HEK293 (cell line): ENCODE measurements at regions of chr19 and their contacts with region 1.

Region 1: GRCh38 chr19:31054430-31054829 is 294.8 kb downstream of the TSHZ3 start:
- H3K4me3 ChIP-seq: no peak overlapping the region
- H3K27ac ChIP-seq: no peak overlapping the region
- H3K4me1 ChIP-seq: no peaks in the 10 kb centered on the region
- CTCF ChIP-seq: peak; percentile 78

Region 2: GRCh38 chr19:30669329-30670010 is 385.0 kb before region 1 on chr19:
- CTCF ChIA-PET with region 1: interaction called, 12 read pairs
- POLR2A ChIA-PET with region 1: no interaction called
- H3K4me3 ChIP-seq: no peak overlapping the region
- H3K27ac ChIP-seq: no peak overlapping the region
- H3K4me1 ChIP-seq: peaks cover 15% of the 10 kb centered on the region
- CTCF ChIP-seq: peak; percentile 92

Region 3: GRCh38 chr19:30792561-30793505 is 261.6 kb before region 1 on chr19:
- CTCF ChIA-PET with region 1: interaction called, 10 read pairs
- POLR2A ChIA-PET with region 1: no interaction called
- H3K4me3 ChIP-seq: no peak overlapping the region
- H3K27ac ChIP-seq: no peak overlapping the region
- H3K4me1 ChIP-seq: no peaks in the 10 kb centered on the region
- CTCF ChIP-seq: no peak

Region 4: GRCh38 chr19:31064491-31064890 is 10.1 kb after region 1 on chr19:
- CTCF ChIA-PET with region 1: interaction called, 35 read pairs
- POLR2A ChIA-PET with region 1: no interaction called
- H3K4me3 ChIP-seq: no peak overlapping the region
- H3K27ac ChIP-seq: no peak overlapping the region
- H3K4me1 ChIP-seq: peaks cover 14% of the 10 kb centered on the region
- CTCF ChIP-seq: no peak

Region 5: DNA sequence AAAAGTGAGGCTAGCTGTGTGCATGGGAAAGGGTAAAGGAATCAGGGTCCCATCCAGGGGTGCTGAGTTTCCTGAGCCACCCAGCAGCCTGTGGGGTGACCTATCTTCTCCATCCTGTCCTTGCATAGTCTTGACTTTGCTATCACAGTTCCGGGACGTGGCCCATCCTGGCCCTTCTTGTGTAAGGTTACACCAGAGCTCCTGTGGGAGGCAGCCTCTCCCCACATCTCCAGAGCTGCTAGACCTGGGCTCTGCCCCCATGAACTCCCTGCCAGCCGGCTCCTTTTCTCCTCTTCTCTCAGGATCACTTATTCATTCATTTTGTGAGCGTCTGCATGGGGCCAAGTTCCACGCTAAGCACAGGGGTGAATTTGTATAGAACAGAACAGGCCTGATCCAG is 55.9 kb after region 1 on chr19:
- CTCF ChIA-PET with region 1: interaction called, 12 read pairs
- POLR2A ChIA-PET with region 1: no interaction called
- H3K4me3 ChIP-seq: no peak overlapping the region
- H3K27ac ChIP-seq: no peak overlapping the region
- H3K4me1 ChIP-seq: peaks cover 16% of the 10 kb centered on the region
- CTCF ChIP-seq: 0 out of 2 replicates have a peak, but pooled peaks have one; percentile 24

Region 6: GRCh38 chr19:31349160-31349881 is 294.9 kb after region 1 on chr19 and contains the start of gene TSHZ3:
- CTCF ChIA-PET with region 1: interaction called, 45 read pairs
- POLR2A ChIA-PET with region 1: no interaction called
- H3K4me3 ChIP-seq: peak within 1 kb of the TSS; percentile 63
- H3K27ac ChIP-seq: peak within 1 kb of the TSS; percentile 97
- H3K4me1 ChIP-seq: peaks cover 23% of the 10 kb centered on the region
- CTCF ChIP-seq: no peak

Region 7: GRCh38 chr19:32224371-32225244 is 1170.2 kb after region 1 on chr19:
- CTCF ChIA-PET with region 1: interaction called, 39 read pairs
- POLR2A ChIA-PET with region 1: no interaction called
- H3K4me3 ChIP-seq: no peak overlapping the region
- H3K27ac ChIP-seq: no peak overlapping the region
- H3K4me1 ChIP-seq: peaks cover 10% of the 10 kb centered on the region
- CTCF ChIP-seq: peak; percentile 97